ENCODE measurements at regions of chr3 and their contacts with region 1.

Region 1: GRCh38 chr3:154188846-154189245 is 67.7 kb downstream of the ARHGEF26 start:
- DNase-seq: no peak
- H3K4me3 ChIP-seq: no peak overlapping the region
- H3K27ac ChIP-seq: no peak overlapping the region
- H3K4me1 ChIP-seq: peaks cover 0 to 19% (median 16%) of the 10 kb centered on the region in 4 donors
- H3K27me3 ChIP-seq: no peaks in the 10 kb centered on the region
- CTCF ChIP-seq: no peak
- EP300 ChIP-seq: no peak
- POLR2A ChIP-seq: no peak

Region 2: GRCh38 chr3:154224366-154225265 is 35.8 kb after region 1 on chr3:
- intact Hi-C with region 1: loop called (anchors 5 kb)
- DNase-seq: no peak
- H3K4me3 ChIP-seq: no peak overlapping the region
- H3K27ac ChIP-seq: peak overlapping the region in 3 of 4 donors; percentile 18 to 57 (median 35)
- H3K4me1 ChIP-seq: peaks cover 2 to 40% (median 35%) of the 10 kb centered on the region in 4 donors
- H3K27me3 ChIP-seq: no peaks in the 10 kb centered on the region
- CTCF ChIP-seq: no peak
- EP300 ChIP-seq: no peak
- POLR2A ChIP-seq: no peak

Measured in esophagus muscularis mucosa (tissue), 4 donors.